PC-9 (cell line): ENCODE measurements at regions of chr3 and their contacts with region 1.

Region 1: DNA sequence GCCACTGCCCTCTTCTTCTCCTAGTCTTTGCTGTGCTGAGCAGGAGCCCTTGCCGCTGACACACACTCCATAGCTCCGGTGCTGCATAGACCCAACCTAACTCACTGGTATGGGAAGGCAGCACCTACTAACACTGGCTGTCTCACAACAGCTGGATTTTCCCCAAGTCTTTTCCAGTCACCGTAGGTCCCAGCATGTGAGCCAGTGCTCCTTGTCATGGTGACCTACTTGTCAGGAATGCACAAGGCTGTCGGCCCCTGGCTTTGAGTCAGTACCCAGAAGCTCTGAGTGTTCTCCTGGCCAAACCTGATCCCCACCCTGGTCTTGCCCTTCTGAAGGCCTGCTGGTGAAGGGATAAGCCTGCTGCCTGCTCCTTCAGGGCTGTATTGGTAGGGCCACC is 25.7 kb downstream of the AMOTL2 start:
- DNase-seq: peak; percentile 91 to 96
- H3K4me3 ChIP-seq: no peak overlapping the region
- H3K27ac ChIP-seq: peak overlapping the region; percentile 100
- H3K4me1 ChIP-seq: peaks cover 67% of the 10 kb centered on the region
- H3K27me3 ChIP-seq: no peaks in the 10 kb centered on the region
- CTCF ChIP-seq: no peak

Region 2: DNA sequence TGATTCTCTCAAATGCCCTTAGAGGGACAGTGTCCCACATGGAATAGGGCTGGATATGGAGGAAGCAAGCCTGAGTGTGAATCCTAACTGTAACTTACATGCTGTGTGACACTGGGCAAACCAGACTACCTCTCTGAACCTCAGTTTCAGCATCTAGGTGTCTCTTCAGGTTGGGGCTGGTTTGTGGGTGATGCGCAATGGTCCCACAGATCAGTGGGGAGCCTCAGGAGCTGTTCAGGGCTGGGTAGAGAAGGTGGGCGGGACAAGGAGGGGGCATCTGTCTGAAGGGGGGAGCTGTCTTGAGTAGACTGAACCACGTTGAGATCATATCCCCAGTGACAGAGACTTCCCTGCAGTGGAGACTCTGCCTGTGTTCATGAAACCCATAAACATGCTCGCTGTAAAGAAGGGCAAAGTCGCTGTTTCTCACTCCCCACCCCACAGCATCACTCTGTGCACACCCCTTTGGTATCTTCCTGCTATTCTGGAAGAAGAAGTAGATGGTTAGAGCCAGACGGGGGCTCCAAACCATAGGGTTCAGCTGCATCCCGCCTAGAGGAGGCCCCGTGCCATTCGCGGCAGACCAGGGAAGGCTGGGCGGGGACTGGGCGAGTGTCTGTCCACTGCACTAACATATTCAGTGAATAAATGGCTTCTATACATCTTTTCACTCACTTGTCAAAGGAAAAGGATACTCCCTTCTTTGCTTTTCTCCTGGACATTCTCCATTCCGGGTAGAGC is 514.5 kb before region 1 on chr3:
- CTCF ChIA-PET with region 1: no interaction called
- POLR2A ChIA-PET with region 1: no interaction called
- intact Hi-C with region 1: no loop called
- DNase-seq: no peak
- H3K4me3 ChIP-seq: no peak overlapping the region
- H3K27ac ChIP-seq: no peak overlapping the region
- H3K4me1 ChIP-seq: no peaks in the 10 kb centered on the region
- H3K27me3 ChIP-seq: peaks cover 19% of the 10 kb centered on the region
- CTCF ChIP-seq: no peak

Region 3: DNA sequence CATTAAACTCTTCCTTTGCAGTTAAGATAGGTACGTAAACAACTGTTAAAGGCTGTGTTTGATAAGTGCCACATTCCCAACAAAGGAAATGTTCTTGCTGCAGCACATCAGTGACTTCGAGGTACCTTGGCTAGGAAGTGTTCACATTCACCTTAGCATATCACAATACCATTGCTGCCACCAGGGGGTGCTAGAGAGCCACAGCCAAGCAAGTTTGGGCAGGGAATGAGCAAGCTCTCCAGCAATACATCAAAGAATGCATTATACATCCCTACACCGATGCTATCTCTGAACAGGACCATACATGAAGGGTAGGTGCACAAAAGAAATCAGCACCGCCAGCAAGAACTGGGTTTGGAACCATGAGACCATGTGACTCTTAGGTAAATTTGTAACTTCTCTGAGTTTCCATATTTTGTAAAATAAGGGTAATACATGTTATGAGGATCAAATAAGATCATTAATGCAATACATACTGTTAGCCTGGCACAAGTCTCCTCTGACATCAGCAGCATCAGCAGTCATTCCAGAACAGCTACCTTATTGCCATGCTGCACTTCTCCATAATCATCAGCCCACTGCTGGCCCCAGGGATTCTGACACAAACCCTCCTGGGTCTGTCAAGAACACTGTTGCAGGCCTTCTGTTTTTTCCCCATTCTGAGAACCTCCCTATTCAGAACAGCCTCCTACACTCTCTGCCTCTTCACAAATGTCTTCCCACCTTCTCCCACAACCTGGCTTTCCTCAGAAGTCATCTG is 135.4 kb before region 1 on chr3:
- CTCF ChIA-PET with region 1: no interaction called
- POLR2A ChIA-PET with region 1: no interaction called
- intact Hi-C with region 1: loop called (anchors 5 kb)
- DNase-seq: peak; percentile 71 to 90
- H3K4me3 ChIP-seq: no peak overlapping the region
- H3K27ac ChIP-seq: no peak overlapping the region
- H3K4me1 ChIP-seq: no peaks in the 10 kb centered on the region
- H3K27me3 ChIP-seq: no peaks in the 10 kb centered on the region
- CTCF ChIP-seq: peak; percentile 95

Region 4: GRCh38 chr3:134317106-134317947 is 31.2 kb before region 1 on chr3:
- CTCF ChIA-PET with region 1: interaction called, 3 read pairs
- POLR2A ChIA-PET with region 1: interaction called, 9 read pairs
- intact Hi-C with region 1: loop called (anchors 1 kb)
- DNase-seq: peak; percentile 90 to 93
- H3K4me3 ChIP-seq: no peak overlapping the region
- H3K27ac ChIP-seq: peak overlapping the region; percentile 98
- H3K4me1 ChIP-seq: peaks cover 80% of the 10 kb centered on the region
- H3K27me3 ChIP-seq: no peaks in the 10 kb centered on the region
- CTCF ChIP-seq: no peak

Region 5: GRCh38 chr3:134326760-134327593 is 21.5 kb before region 1 on chr3:
- CTCF ChIA-PET with region 1: interaction called, 3 read pairs
- POLR2A ChIA-PET with region 1: interaction called, 30 read pairs
- intact Hi-C with region 1: loop called (anchors 1 kb)
- DNase-seq: peak; percentile 86 to 98
- H3K4me3 ChIP-seq: peak overlapping the region; percentile 23; the same call in 1 of the 2 replicates
- H3K27ac ChIP-seq: peak overlapping the region; percentile 97
- H3K4me1 ChIP-seq: peaks cover 91% of the 10 kb centered on the region
- H3K27me3 ChIP-seq: no peaks in the 10 kb centered on the region
- CTCF ChIP-seq: no peak

Region 6: DNA sequence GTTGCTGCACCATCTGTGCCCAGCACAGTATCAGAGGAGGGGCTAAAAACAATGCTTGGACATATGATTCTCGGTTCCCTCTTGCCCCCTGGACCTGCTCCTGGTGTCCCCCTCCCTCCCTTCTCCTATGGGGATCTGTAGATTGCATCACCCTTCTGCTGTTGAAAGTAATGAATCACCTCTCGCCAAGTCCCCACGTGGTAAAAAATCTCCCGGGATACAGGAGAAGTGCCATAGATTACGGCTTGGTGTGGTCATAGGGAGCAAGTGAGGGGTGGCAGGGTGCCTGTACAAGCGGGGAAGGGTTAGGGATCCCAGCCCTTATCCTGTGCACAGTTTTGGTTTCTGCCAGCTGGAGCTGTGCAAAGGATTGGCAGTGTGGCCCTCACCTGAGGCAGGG is 11.9 kb before region 1 on chr3:
- CTCF ChIA-PET with region 1: no interaction called
- POLR2A ChIA-PET with region 1: interaction called, 30 read pairs
- intact Hi-C with region 1: loop called (anchors 1 kb)
- DNase-seq: peak; percentile 55 to 69
- H3K4me3 ChIP-seq: no peak overlapping the region
- H3K27ac ChIP-seq: peak overlapping the region; percentile 97
- H3K4me1 ChIP-seq: peaks cover 66% of the 10 kb centered on the region
- H3K27me3 ChIP-seq: no peaks in the 10 kb centered on the region
- CTCF ChIP-seq: no peak

Region 7: GRCh38 chr3:134364061-134364935 is 15.8 kb after region 1 on chr3:
- CTCF ChIA-PET with region 1: interaction called, 5 read pairs
- POLR2A ChIA-PET with region 1: interaction called, 23 read pairs
- intact Hi-C with region 1: no loop called
- DNase-seq: peak; percentile 95 to 98
- H3K4me3 ChIP-seq: peak overlapping the region; percentile 54
- H3K27ac ChIP-seq: peak overlapping the region; percentile 100
- H3K4me1 ChIP-seq: peaks cover 96% of the 10 kb centered on the region
- H3K27me3 ChIP-seq: no peaks in the 10 kb centered on the region
- CTCF ChIP-seq: no peak

Region 8: DNA sequence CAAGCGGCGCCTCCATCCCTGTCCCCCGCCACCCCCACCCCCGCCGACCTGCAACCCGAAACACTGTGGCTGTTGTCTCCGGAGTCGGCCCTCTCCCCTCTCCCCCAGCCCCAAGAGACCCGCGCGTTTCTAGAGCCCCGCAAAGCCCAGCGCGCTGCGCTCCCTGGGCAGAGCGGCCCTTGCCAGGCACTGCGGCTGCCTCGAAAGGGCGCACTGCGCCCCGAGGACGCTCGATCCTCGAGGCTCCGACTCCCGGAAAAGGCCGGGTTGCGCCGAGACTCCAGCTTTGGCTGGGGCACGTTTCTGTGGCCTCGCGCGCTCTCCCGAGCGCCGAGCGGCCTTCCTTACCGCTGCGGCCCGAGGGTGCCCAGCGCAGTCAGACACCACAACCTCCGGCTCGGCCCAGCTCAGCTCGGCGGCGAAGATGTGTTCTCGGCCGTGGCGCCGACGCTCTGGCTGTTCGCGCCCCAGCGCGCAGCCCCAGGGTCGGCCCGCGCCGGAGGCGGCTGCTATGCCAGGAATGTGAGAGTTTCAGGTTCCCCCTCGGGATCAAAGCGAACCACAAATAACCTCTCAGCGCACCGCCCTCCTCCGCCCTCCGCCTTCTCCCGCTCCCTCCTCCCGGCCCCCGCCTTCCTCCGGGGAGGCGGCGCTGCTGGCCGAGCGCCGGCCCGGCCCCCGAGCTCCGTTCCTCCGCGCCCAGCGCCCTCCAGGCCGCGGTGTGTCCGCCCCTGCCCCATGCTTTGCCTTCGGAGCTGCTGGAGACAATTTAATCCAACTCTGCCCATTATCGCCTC is 25.7 kb after region 1 on chr3 and contains the start of gene AMOTL2:
- CTCF ChIA-PET with region 1: no interaction called
- POLR2A ChIA-PET with region 1: interaction called, 10 read pairs
- intact Hi-C with region 1: loop called (anchors 1 kb)
- DNase-seq: peak; percentile 86 to 98
- H3K4me3 ChIP-seq: peak within 1 kb of the TSS; percentile 100
- H3K27ac ChIP-seq: peak within 1 kb of the TSS; percentile 98
- H3K4me1 ChIP-seq: peaks cover 70% of the 10 kb centered on the region
- H3K27me3 ChIP-seq: no peaks in the 10 kb centered on the region
- CTCF ChIP-seq: no peak
- total RNA-seq, gene AMOTL2: 147 and 221 TPM in 2 replicates